ENCODE measurements at regions of chr1 and their contacts with region 1.

Region 1: DNA sequence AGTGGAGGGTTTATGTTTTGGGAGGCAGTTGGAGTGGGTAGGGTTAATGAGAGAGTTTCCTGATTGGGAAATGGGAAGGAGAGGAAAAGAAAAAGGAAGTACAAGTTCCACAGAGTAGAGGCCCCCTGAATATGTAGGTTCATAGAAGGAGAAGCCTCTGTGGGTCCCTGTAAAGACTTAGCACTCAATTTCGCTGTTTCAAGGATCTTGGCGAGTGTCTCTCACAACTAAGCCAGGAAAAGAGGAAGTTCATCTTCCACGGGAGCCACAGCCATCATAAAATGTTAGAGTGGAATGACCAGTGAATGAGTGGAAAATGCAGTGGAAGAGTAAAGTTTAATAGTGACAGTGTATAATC is 17.4 kb upstream of the DPYD start:
- DNase-seq: no peak
- H3K4me3 ChIP-seq: peak overlapping the region; percentile 1; the same call in 1 of the 2 replicates
- H3K27ac ChIP-seq: peak overlapping the region; percentile 67
- H3K4me1 ChIP-seq: peaks cover 28% of the 10 kb centered on the region
- H3K27me3 ChIP-seq: no peaks in the 10 kb centered on the region
- CTCF ChIP-seq: no peak

Region 2: DNA sequence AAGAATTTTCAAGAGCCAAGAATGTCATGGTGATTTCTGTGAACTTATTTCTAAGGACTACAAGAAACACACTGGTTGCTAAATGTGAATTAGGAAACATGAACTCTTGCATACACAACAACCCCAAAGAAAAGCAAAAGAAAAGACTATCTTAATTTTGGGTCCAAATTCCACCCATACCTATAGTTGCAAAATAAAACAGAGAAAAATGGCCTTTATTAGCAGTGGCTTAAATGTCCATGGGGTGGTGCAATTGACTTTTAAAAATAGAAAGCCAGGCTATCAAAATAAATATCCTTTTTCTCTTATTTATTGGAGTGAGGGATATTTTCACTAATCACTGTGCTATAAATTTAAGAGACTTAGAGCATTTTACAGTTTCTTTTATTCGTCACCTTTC is 63.5 kb after region 1 on chr1:
- CTCF ChIA-PET with region 1: no interaction called
- POLR2A ChIA-PET with region 1: no interaction called
- intact Hi-C with region 1: loop called (anchors 10 kb)
- DNase-seq: no peak
- H3K4me3 ChIP-seq: no peak overlapping the region
- H3K27ac ChIP-seq: no peak overlapping the region
- H3K4me1 ChIP-seq: peaks cover 15% of the 10 kb centered on the region
- H3K27me3 ChIP-seq: no peaks in the 10 kb centered on the region
- CTCF ChIP-seq: peak; percentile 35; the same call in 1 of the 2 replicates

Region 3: GRCh38 chr1:98048244-98048643 is 110.0 kb after region 1 on chr1:
- CTCF ChIA-PET with region 1: interaction called, 3 read pairs
- POLR2A ChIA-PET with region 1: no interaction called
- intact Hi-C with region 1: loop called (anchors 5 kb)
- DNase-seq: peak in 1 of 2 experiments; percentile 59
- H3K4me3 ChIP-seq: no peak overlapping the region
- H3K27ac ChIP-seq: no peak overlapping the region
- H3K4me1 ChIP-seq: no peaks in the 10 kb centered on the region
- H3K27me3 ChIP-seq: no peaks in the 10 kb centered on the region
- CTCF ChIP-seq: no peak

Region 4: GRCh38 chr1:98468111-98468717 is 530.0 kb after region 1 on chr1:
- CTCF ChIA-PET with region 1: no interaction called
- POLR2A ChIA-PET with region 1: no interaction called
- intact Hi-C with region 1: loop called (anchors 5 kb)
- DNase-seq: peak; percentile 4 to 59
- H3K4me3 ChIP-seq: no peak overlapping the region
- H3K27ac ChIP-seq: no peak overlapping the region
- H3K4me1 ChIP-seq: no peaks in the 10 kb centered on the region
- H3K27me3 ChIP-seq: no peaks in the 10 kb centered on the region
- CTCF ChIP-seq: peak; percentile 98